ENCODE measurements at regions of chr3 and their contacts with region 1.

Region 1: DNA sequence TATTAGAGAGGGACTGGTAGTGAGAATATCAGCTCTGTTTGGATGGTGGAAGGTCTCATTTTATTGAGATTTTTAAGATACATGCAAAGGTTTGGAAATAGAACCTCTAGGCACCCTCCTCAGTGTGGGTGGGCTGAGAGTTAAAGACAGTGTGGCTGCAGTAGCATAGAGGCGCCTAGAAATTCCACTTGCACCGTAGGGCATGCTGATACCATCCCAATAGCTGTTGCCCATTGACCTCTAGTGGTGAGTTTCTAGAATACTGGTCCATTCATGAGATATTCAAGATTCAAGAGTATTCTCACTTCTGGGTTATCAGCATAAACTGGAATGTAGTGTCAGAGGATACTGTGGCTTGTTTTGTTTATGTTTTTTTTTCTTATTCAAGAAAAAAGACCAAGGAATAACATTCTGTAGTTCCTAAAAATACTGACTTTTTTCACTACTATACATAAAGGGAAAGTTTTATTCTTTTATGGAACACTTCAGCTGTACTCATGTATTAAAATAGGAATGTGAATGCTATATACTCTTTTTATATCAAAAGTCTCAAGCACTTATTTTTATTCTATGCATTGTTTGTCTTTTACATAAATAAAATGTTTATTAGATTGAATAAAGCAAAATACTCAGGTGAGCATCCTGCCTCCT is 87.2 kb downstream of the TGFBR2 start:
- DNase-seq: no peak

Region 2: GRCh38 chr3:30042274-30042859 is 651.2 kb before region 1 on chr3:
- intact Hi-C with region 1: loop called (anchors 5 kb)
- DNase-seq: no peak

Region 3: DNA sequence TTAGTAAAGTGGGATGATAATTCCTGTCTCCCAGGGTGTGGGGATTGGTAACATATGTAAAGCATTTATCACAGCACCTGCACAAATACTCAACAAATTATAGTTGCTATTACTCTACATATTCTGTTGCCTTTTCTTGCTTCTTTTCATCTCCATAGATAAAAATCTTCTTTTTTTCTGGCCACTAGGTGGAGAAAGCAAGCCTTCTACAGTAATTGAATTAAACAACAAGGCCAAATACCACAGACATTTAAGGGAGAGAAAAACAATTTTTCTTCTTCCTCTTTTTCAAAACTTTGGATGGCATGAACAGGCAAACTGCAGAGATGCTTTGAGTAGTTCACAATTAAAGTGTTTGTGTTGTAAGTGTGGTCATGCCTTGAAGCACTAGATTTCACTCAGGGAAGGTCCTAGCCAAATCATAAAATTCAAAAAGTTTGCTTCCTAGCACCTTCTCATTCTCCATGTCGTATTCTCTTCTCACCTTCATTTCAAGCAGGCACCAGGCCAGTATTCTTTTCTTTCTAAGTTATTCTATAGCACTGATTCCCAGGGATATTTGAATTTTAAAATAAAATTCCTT is 580.6 kb before region 1 on chr3:
- intact Hi-C with region 1: loop called (anchors 5 kb)
- DNase-seq: no peak

Region 4: GRCh38 chr3:30199096-30199759 is 494.4 kb before region 1 on chr3:
- intact Hi-C with region 1: loop called (anchors 5 kb)
- DNase-seq: peak; percentile 81

Region 5: DNA sequence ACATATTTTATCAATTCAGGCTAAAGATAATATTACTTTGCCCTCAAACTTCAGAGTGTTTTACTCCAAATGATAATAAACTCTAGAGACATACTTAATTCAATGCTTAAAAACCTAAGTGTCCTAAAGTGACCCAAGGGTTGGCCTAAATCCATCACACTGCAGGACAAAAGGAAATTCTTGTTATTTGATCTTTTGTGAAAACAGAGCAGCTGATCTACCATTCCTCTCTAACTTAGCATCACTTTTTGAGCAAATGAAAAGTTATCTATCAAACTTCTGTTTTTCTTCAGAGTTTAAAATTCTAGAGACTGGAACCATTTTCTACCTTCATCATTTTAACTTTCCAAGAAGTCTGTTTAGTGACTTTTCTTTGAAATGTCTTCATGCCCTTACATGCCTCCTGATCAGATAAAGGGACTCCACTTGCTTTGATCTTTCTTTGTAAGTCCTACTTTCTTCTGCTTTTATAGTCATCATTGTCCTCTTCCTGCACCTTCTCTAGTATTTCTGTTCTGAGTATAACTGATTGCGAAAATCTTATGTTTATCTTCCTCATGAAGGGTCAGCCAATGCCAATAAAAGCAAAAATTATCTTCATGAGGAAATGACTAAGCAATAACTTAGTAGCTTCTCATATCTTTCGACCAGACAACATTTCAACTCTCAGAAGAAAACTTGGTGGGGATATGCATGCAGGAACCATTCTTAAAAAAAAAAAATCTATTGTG is 465.9 kb before region 1 on chr3:
- intact Hi-C with region 1: loop called (anchors 10 kb)
- DNase-seq: no peak

Region 6: DNA sequence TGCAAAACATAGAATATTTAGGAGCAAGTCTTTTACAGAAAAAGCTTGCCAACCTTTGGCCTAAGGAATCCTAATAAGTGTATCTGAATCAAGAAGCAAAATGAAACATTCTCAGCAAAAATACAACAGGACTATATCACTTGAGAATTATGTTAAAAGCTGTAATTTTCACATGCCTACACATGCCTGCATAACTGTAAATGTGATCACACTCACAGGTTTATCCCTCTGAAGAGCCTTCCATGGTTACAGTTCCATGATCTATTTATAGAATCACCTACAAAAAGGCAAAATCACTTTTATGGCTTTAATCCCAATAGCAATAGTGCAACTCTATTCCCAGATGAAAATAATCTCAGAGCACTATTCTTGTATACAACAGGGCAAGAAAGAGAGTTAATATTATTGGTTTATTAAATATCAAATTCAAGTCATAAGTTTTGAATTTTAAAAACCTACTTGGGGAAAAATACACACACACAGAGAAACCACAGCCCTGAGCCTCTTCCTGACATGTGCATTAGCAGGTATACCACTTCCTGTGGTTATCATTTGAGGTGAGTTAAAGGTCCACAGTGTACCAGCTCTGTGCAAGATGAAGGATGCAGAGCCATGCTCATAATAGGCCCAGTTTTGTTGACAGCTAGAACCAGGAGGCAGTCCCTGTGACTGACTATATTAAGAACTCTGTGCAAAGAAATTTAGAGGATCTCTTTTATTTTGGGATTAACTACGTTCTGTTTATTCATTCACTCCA is 339.7 kb before region 1 on chr3:
- intact Hi-C with region 1: loop called (anchors 5 kb)
- DNase-seq: no peak

Region 7: DNA sequence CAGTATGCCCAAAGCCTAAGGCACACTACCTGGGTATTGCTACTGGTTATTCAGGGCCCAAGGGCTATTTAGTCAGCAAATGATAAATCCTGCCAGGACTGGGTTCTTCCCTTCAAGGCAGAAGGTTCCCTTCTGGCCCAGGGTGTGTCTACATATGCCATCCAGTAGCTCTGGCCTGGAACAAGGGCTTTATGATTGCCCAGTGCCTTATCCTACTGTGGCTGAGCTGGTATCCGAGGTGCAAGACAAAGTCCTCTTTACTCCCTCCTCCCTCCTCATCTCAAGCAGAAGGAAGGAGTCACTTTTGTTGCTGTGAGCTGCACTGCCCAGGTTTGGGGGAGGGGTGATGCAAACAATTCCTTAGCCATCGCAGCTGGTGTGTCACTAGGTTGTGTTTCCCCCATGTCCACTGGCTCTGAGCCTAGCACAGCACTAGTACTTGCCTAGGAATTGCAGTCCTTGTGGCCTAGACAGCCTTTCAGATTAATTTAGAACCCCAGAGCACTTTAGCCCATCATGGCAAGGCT is 309.0 kb before region 1 on chr3:
- intact Hi-C with region 1: no loop called
- DNase-seq: no peak

Region 8: GRCh38 chr3:30448450-30449289 is 244.9 kb before region 1 on chr3:
- intact Hi-C with region 1: loop called (anchors 5 kb)
- DNase-seq: no peak

Region 9: GRCh38 chr3:30855400-30856292 is 162.1 kb after region 1 on chr3:
- intact Hi-C with region 1: no loop called
- DNase-seq: no peak